ENCODE measurements at regions of chr1 and their contacts with region 1.

Region 1: GRCh38 chr1:156456622-156457465 is 43.7 kb downstream of the MEF2D start:
- DNase-seq: peak; percentile 99
- H3K4me3 Mint-ChIP-seq: peak overlapping the region; percentile 90
- H3K27ac Mint-ChIP-seq: peak overlapping the region; percentile 98
- H3K4me1 Mint-ChIP-seq: peaks cover 23% of the 10 kb centered on the region
- H3K27me3 Mint-ChIP-seq: peaks cover 4% of the 10 kb centered on the region
- CTCF ChIP-seq: no peak

Region 2: DNA sequence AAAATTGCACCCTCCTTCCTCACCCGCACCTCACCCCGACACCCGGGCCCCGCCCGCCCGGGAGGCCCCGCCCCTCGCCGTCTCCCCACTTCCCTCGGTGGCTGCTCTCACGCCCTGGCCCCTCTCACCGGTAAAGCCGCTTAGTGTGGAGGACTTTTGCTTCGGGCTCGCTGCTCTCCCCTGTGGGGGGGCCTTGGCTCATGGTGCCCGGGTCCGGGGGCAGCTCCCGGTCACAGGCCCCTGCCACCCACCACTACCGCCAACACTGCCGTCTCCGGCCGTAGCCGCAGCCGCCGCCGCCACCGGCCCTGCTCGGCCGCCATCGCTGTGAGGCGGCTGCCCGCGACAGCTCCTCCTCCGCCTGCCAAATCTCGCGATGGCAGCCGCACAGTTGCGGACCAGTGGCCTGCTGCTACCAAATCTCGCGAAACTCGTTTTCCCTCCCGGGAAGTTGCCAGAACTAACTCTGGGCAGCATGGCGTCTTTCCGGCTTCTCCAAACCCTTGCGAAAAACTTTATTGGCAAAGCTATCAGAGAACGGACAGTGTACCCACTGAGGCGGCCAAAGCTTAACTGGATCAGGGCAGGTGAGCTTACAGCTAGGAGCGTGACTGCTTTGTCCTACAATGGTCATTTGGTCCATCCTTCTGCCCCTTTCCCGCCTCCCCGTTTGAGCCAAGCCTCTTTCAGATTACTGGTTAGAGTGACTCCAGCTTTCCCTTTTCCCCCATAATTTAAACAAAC is 174.2 kb before region 1 on chr1 and contains the start of gene SMG5:
- CTCF ChIA-PET with region 1: no interaction called
- intact Hi-C with region 1: no loop called
- DNase-seq: peak; percentile 98
- H3K4me3 Mint-ChIP-seq: peak within 1 kb of the TSS; percentile 72
- H3K27ac Mint-ChIP-seq: peak within 1 kb of the TSS; percentile 78
- H3K4me1 Mint-ChIP-seq: peaks cover 19% of the 10 kb centered on the region
- H3K27me3 Mint-ChIP-seq: no peaks in the 10 kb centered on the region
- CTCF ChIP-seq: no peak
- total RNA-seq, gene SMG5: 117 and 118 TPM in 2 replicates

Region 3: DNA sequence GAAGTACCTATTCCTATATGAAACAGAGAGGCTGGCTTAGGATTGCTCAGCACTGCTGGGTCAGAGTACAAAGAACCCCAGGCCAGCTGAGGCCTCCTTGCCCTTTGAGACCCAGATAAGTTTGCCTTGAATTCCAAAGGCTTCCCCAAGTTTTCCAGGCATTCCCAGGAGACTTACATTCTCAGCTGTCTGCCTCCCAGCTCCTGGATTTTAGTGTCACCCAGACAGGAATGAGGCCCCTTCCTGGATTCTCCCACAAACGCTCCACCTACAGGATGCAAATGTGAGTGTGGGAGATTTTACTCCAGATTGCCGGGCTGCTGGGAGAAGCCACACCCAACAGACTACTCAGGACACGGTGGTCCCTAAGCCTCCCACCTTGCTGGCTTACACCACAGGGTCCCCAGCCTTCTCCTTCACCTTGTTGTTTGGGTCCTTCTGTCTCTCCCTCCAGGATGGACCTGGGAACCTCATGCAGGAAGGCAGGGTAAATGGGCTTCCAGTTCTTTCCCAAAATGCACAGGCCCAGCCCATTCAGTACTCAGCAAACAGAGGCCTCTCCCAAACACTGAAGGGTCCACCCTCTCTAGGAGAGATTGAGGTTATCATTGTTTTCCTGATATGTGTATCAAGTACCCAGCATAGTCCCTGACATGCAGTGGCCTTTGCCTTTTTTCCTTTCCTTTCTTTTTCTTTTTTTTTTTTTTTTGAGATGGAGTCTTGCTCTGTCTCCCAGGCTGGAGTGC is 77.3 kb before region 1 on chr1:
- CTCF ChIA-PET with region 1: no interaction called
- intact Hi-C with region 1: no loop called
- DNase-seq: no peak
- H3K4me3 Mint-ChIP-seq: no peak overlapping the region
- H3K27ac Mint-ChIP-seq: no peak overlapping the region
- H3K4me1 Mint-ChIP-seq: no peaks in the 10 kb centered on the region
- H3K27me3 Mint-ChIP-seq: peaks cover 30% of the 10 kb centered on the region
- CTCF ChIP-seq: no peak

Region 4: GRCh38 chr1:156445789-156446263 is 11.0 kb before region 1 on chr1:
- CTCF ChIA-PET with region 1: interaction called, 10 read pairs
- intact Hi-C with region 1: no loop called
- DNase-seq: peak; percentile 94
- H3K4me3 Mint-ChIP-seq: no peak overlapping the region
- H3K27ac Mint-ChIP-seq: no peak overlapping the region
- H3K4me1 Mint-ChIP-seq: peaks cover under 1% of the 10 kb centered on the region
- H3K27me3 Mint-ChIP-seq: peaks cover 72% of the 10 kb centered on the region
- CTCF ChIP-seq: peak; percentile 98

Region 5: GRCh38 chr1:156500797-156501499 is 44.1 kb after region 1 on chr1:
- CTCF ChIA-PET with region 1: interaction called, 36 read pairs
- intact Hi-C with region 1: loop called (anchors 1 kb)
- DNase-seq: peak; percentile 98
- H3K4me3 Mint-ChIP-seq: peak overlapping the region; percentile 88
- H3K27ac Mint-ChIP-seq: peak overlapping the region; percentile 97
- H3K4me1 Mint-ChIP-seq: peaks cover 65% of the 10 kb centered on the region
- H3K27me3 Mint-ChIP-seq: no peaks in the 10 kb centered on the region
- CTCF ChIP-seq: peak; percentile 79

Region 6: GRCh38 chr1:156601122-156601830 is 144.4 kb after region 1 on chr1 and contains the start of gene GPATCH4:
- CTCF ChIA-PET with region 1: no interaction called
- intact Hi-C with region 1: loop called (anchors 2 kb)
- DNase-seq: peak; percentile 75
- H3K4me3 Mint-ChIP-seq: peak within 1 kb of the TSS; percentile 80
- H3K27ac Mint-ChIP-seq: peak within 1 kb of the TSS; percentile 84
- H3K4me1 Mint-ChIP-seq: peaks cover 8% of the 10 kb centered on the region
- H3K27me3 Mint-ChIP-seq: no peaks in the 10 kb centered on the region
- CTCF ChIP-seq: no peak
- total RNA-seq, gene GPATCH4: 52.4 and 57.0 TPM in 2 replicates